MCF 10A (cell line): ENCODE measurements at regions of chr10 and their contacts with region 1.

Region 1: GRCh38 chr10:116683821-116684220 is 58.5 kb downstream of the HSPA12A start:
- DNase-seq: no peak
- H3K4me3 Mint-ChIP-seq: no peak overlapping the region
- H3K27ac Mint-ChIP-seq: no peak overlapping the region
- H3K4me1 Mint-ChIP-seq: peaks cover 6% of the 10 kb centered on the region
- H3K27me3 Mint-ChIP-seq: no peaks in the 10 kb centered on the region
- CTCF ChIP-seq: no peak

Region 2: GRCh38 chr10:116538456-116538855 is 145.4 kb before region 1 on chr10:
- CTCF ChIA-PET with region 1: no interaction called
- POLR2A ChIA-PET with region 1: no interaction called
- intact Hi-C with region 1: no loop called
- DNase-seq: peak; percentile 48
- H3K4me3 Mint-ChIP-seq: no peak overlapping the region
- H3K27ac Mint-ChIP-seq: no peak overlapping the region
- H3K4me1 Mint-ChIP-seq: peaks cover 6% of the 10 kb centered on the region
- H3K27me3 Mint-ChIP-seq: no peaks in the 10 kb centered on the region
- CTCF ChIP-seq: no peak

Region 3: DNA sequence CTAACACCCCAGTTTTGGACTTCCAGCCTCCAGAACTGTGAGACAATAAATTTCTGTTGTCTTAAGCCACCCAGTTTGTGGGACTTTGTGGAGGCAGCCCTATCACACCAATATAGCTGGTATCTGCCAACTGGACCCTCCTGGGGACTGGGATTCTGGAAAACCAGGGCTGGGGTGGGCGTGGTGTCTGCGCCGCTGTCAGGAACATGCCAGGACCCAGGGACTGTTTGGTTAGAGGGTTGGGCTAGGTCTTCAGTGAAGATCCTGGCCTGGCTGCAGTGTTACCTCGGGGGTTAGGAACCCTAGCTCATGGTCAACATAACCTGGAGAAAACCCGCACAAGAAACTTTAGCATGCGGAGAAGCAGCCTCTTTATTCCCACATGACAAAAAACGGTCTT is 20.5 kb before region 1 on chr10:
- CTCF ChIA-PET with region 1: interaction called, 11 read pairs
- POLR2A ChIA-PET with region 1: no interaction called
- intact Hi-C with region 1: no loop called
- DNase-seq: no peak
- H3K4me3 Mint-ChIP-seq: no peak overlapping the region
- H3K27ac Mint-ChIP-seq: no peak overlapping the region
- H3K4me1 Mint-ChIP-seq: no peaks in the 10 kb centered on the region
- H3K27me3 Mint-ChIP-seq: no peaks in the 10 kb centered on the region
- CTCF ChIP-seq: no peak

Region 4: GRCh38 chr10:116721547-116722392 is 37.9 kb after region 1 on chr10:
- CTCF ChIA-PET with region 1: interaction called, 12 read pairs
- POLR2A ChIA-PET with region 1: no interaction called
- intact Hi-C with region 1: no loop called
- DNase-seq: no peak
- H3K4me3 Mint-ChIP-seq: no peak overlapping the region
- H3K27ac Mint-ChIP-seq: no peak overlapping the region
- H3K4me1 Mint-ChIP-seq: no peaks in the 10 kb centered on the region
- H3K27me3 Mint-ChIP-seq: no peaks in the 10 kb centered on the region
- CTCF ChIP-seq: no peak

Region 5: DNA sequence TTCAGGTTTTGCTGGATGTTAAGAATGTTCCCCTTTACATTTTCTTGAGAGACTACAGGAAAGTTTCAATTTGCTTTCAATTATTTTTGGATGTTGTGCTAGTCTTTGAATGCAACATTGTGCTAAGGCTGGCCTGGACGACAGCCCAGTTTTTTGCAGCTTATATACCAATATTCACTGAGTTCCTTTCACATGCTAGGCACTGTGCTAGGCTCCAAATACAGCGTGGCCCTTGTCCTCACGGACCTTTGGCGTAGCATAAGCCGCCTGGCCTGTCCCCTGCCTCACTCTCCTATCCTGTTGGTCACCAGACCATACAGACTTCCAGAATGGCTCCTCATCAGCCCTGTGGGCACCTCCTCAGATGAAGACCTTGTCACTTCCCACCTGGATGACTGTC is 78.1 kb after region 1 on chr10:
- CTCF ChIA-PET with region 1: interaction called, 13 read pairs
- POLR2A ChIA-PET with region 1: interaction called, 4 read pairs
- intact Hi-C with region 1: no loop called
- DNase-seq: no peak
- H3K4me3 Mint-ChIP-seq: no peak overlapping the region
- H3K27ac Mint-ChIP-seq: no peak overlapping the region
- H3K4me1 Mint-ChIP-seq: no peaks in the 10 kb centered on the region
- H3K27me3 Mint-ChIP-seq: no peaks in the 10 kb centered on the region
- CTCF ChIP-seq: no peak

Region 6: DNA sequence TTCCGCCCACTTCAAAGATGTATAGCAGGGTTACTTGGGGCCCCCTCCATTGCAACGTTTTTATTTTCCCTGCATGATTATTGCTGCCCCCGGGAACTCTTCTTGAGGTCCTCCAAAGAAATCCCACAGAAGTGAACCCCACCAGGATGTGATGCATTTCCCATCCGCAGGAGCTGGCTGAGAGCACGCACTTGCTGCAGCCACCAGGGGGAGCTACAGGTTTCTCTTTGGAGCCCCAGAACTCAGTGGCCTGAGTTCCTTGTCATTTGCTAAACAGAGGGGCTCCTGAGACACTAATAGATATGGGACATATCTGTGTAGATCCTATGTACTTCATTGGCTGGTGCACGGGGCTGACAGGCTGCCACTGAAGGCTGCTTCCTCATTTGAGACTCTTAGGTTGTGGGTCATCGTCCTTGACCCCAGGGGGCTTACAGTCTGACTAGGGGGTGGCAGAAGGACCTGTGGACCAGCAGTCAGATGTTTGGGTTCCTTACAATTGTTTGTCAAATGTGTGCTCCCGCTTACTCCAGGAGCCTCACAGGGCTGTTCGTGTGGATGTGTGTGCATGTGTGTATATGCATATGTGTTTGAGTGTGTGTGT is 113.2 kb after region 1 on chr10:
- CTCF ChIA-PET with region 1: interaction called, 339 read pairs
- POLR2A ChIA-PET with region 1: no interaction called
- intact Hi-C with region 1: no loop called
- DNase-seq: peak; percentile 78
- H3K4me3 Mint-ChIP-seq: no peak overlapping the region
- H3K27ac Mint-ChIP-seq: no peak overlapping the region
- H3K4me1 Mint-ChIP-seq: no peaks in the 10 kb centered on the region
- H3K27me3 Mint-ChIP-seq: no peaks in the 10 kb centered on the region
- CTCF ChIP-seq: peak; percentile 96